Breast epithelium (tissue), 4 donors: ENCODE measurements at regions of chr2 and their contacts with region 1.

Region 1: GRCh38 chr2:166394245-166394644 is 18.5 kb upstream of the SCN9A start:
- DNase-seq: no peak
- H3K4me3 ChIP-seq: no peak overlapping the region
- H3K27ac ChIP-seq: no peak overlapping the region
- H3K4me1 ChIP-seq: no peaks in the 10 kb centered on the region
- H3K27me3 ChIP-seq: no peaks in the 10 kb centered on the region
- CTCF ChIP-seq: no peak
- POLR2A ChIP-seq: no peak

Region 2: GRCh38 chr2:168025487-168026202 is 1631.4 kb after region 1 on chr2:
- intact Hi-C with region 1: loop called (anchors 10 kb)
- DNase-seq: peak in 1 of 2 donors; percentile 44
- H3K4me3 ChIP-seq: no peak overlapping the region
- H3K27ac ChIP-seq: no peak overlapping the region
- H3K4me1 ChIP-seq: no peaks in the 10 kb centered on the region
- H3K27me3 ChIP-seq: no peaks in the 10 kb centered on the region
- CTCF ChIP-seq: no peak
- POLR2A ChIP-seq: no peak